ENCODE measurements at regions of chr6 and their contacts with region 1.

Region 1: GRCh38 chr6:11496152-11497060 is 41.1 kb upstream of the TMEM170B start:
- DNase-seq: peak in 1 of 2 donors; percentile 81
- ATAC-seq: peak; percentile 84 to 95 (median 92)
- H3K4me3 ChIP-seq: no peak overlapping the region
- H3K27ac ChIP-seq: peak overlapping the region in 6 of 10 donors; percentile 32 to 73 (median 44)
- H3K4me1 ChIP-seq: peaks cover 0 to 32% (median 10%) of the 10 kb centered on the region in 9 donors
- H3K27me3 ChIP-seq: no peaks in the 10 kb centered on the region
- CTCF ChIP-seq: peak; percentile 83 to 98 (median 93)

Region 2: DNA sequence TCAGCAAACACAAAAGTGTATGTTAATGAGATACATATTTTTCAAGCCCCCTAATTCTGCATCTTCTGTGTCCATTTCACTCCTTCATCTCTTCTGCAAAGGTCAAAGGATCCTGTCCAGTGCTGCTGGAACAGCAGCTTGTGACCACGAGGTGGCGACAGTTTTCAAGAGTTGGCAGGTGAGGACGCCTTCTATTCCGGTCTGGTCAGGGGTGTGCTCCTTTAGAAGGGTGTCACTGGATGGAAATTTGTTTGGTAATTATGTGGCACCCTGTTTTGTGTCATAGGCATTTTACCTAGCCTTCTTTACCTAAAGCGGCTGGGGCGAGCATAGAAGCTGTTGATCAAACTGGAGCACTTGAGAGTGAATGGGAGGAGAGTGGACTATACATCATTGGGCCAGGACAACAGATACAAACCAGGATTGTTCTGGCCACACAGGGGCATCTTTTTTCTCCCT is 352.0 kb before region 1 on chr6:
- intact Hi-C with region 1: loop called (anchors 1 to 5 kb)
- DNase-seq: peak; percentile 75 to 82
- ATAC-seq: peak; percentile 91 to 95 (median 94)
- H3K4me3 ChIP-seq: no peak overlapping the region
- H3K27ac ChIP-seq: no peak overlapping the region
- H3K4me1 ChIP-seq: peaks cover 0 to 17% (median 0%) of the 10 kb centered on the region in 9 donors
- H3K27me3 ChIP-seq: no peaks in the 10 kb centered on the region
- CTCF ChIP-seq: peak; percentile 77 to 97 (median 92)

Region 3: GRCh38 chr6:11207199-11207968 is 289.0 kb before region 1 on chr6:
- intact Hi-C with region 1: no loop called
- DNase-seq: peak in 1 of 2 donors; percentile 60
- ATAC-seq: peak; percentile 31 to 81 (median 76)
- H3K4me3 ChIP-seq: no peak overlapping the region
- H3K27ac ChIP-seq: peak overlapping the region in 6 of 10 donors; percentile 26 to 89 (median 61)
- H3K4me1 ChIP-seq: peaks cover 19 to 100% (median 83%) of the 10 kb centered on the region in 9 donors
- H3K27me3 ChIP-seq: no peaks in the 10 kb centered on the region
- CTCF ChIP-seq: no peak

Region 4: GRCh38 chr6:11232193-11232769 is 264.1 kb before region 1 on chr6 and contains the start of gene NEDD9:
- intact Hi-C with region 1: loop called in 4 of 10 experiments (anchors 10 kb)
- DNase-seq: peak; percentile 92 to 96
- ATAC-seq: peak; percentile 96 to 99 (median 97)
- H3K4me3 ChIP-seq: peak within 1 kb of the TSS; percentile 37 to 78 (median 67)
- H3K27ac ChIP-seq: peak within 1 kb of the TSS; percentile 76 to 93 (median 88)
- H3K4me1 ChIP-seq: peaks cover 0 to 54% (median 18%) of the 10 kb centered on the region in 9 donors
- H3K27me3 ChIP-seq: no peaks in the 10 kb centered on the region
- CTCF ChIP-seq: no peak
- total RNA-seq, gene NEDD9: 10.8 to 34.2 (median 24.6) TPM

Region 5: GRCh38 chr6:11366183-11366933 is 130.0 kb before region 1 on chr6:
- intact Hi-C with region 1: loop called in 1 of 10 experiments (anchors 10 kb)
- DNase-seq: no peak
- ATAC-seq: peak in 1 of 8 donors; percentile 5
- H3K4me3 ChIP-seq: no peak overlapping the region
- H3K27ac ChIP-seq: peak overlapping the region; percentile 76 to 92 (median 86)
- H3K4me1 ChIP-seq: peaks cover 2 to 72% (median 63%) of the 10 kb centered on the region in 9 donors
- H3K27me3 ChIP-seq: no peaks in the 10 kb centered on the region
- CTCF ChIP-seq: no peak